IMR-90 (cell line): ENCODE measurements at regions of chr3 and their contacts with region 1.

Region 1: DNA sequence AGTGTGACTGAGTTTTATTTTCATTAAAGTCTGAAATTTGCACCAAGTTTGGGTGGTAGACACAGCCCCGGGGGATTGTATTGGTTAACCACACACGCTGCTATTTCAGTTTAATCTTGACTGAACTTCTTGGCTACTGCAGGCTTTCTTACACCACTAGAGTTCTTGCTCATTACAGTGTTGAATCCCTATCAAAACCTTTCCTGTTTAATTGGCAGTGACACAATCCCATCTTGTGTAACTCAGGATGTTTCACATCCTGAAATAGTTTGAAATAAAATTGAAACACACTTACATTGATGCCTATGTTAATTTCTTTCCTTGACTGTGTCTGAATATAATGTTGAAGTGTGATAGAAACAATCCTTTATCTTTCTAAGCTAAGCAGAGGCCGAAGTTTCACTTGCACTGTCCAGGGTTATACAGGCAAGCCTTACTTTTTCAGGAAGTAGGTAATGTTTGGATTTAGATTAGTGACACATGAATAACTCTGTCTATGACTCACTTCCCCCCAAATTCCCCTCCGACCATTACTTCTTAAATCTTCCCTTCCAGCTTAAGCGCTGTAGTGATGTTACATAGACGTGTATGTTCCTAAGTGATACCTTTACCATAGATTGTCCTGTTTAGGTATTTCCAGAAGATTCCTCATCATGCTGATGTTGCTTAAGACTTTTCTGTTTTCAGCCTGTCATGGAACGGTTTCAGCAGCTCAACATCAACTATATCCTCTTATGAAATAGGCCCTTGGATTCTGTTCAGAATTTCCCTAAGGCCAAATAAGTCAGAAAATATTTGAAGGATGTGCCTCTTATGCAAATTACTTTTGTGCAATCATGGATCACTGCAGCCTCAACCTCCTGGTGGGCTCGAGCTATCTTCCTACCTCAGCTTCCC is 16.8 kb downstream of the ATG7 start:
- DNase-seq: peak; percentile 96
- ATAC-seq: peak; percentile 79
- H3K4me3 ChIP-seq: peak overlapping the region; percentile 10; the same call in 1 of the 2 replicates
- H3K27ac ChIP-seq: peak overlapping the region; percentile 96
- H3K4me1 ChIP-seq: peaks cover 26% of the 10 kb centered on the region
- H3K27me3 ChIP-seq: no peaks in the 10 kb centered on the region
- CTCF ChIP-seq: no peak
- POLR2A ChIP-seq: peak; percentile 56; the same call in 1 of the 2 replicates
- RAD21 ChIP-seq: no peak

Region 2: GRCh38 chr3:11236595-11237461 is 52.2 kb before region 1 on chr3:
- CTCF ChIA-PET with region 1: interaction called, 3 read pairs
- POLR2A ChIA-PET with region 1: no interaction called
- dilution Hi-C with region 1: no loop called
- in situ Hi-C with region 1: no loop called
- intact Hi-C with region 1: loop called (anchors 2 kb)
- DNase-seq: peak; percentile 69
- ATAC-seq: peak; percentile 16
- H3K4me3 ChIP-seq: no peak overlapping the region
- H3K27ac ChIP-seq: peak overlapping the region; percentile 86
- H3K4me1 ChIP-seq: peaks cover 5% of the 10 kb centered on the region
- H3K27me3 ChIP-seq: no peaks in the 10 kb centered on the region
- CTCF ChIP-seq: peak; percentile 56
- POLR2A ChIP-seq: no peak
- RAD21 ChIP-seq: peak; percentile 43

Region 3: DNA sequence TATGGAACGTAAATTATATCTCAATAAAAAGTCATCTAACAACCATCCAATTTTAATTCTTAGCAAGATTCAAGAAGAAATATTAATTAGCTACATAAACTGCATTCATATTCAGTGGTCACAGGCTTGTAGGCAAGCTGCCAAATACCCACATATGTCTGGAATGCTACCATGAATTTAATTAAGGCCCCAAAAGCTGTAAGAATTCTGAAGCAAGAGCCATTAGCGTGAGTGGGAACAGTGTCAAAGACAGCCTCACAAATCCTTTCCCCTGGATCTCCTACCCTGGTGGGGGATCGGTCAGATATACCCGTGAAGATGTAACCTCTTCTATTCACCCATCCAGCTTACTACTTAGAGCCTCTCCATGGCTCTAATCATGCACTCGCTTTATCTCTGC is 23.1 kb after region 1 on chr3:
- CTCF ChIA-PET with region 1: interaction called, 7 read pairs
- POLR2A ChIA-PET with region 1: no interaction called
- dilution Hi-C with region 1: no loop called
- in situ Hi-C with region 1: no loop called
- intact Hi-C with region 1: loop called (anchors 2 kb)
- DNase-seq: no peak
- ATAC-seq: no peak
- H3K4me3 ChIP-seq: no peak overlapping the region
- H3K27ac ChIP-seq: no peak overlapping the region
- H3K4me1 ChIP-seq: no peaks in the 10 kb centered on the region
- H3K27me3 ChIP-seq: no peaks in the 10 kb centered on the region
- CTCF ChIP-seq: no peak
- POLR2A ChIP-seq: no peak
- RAD21 ChIP-seq: no peak